ENCODE measurements at regions of chr6 and their contacts with region 1.

Region 1: DNA sequence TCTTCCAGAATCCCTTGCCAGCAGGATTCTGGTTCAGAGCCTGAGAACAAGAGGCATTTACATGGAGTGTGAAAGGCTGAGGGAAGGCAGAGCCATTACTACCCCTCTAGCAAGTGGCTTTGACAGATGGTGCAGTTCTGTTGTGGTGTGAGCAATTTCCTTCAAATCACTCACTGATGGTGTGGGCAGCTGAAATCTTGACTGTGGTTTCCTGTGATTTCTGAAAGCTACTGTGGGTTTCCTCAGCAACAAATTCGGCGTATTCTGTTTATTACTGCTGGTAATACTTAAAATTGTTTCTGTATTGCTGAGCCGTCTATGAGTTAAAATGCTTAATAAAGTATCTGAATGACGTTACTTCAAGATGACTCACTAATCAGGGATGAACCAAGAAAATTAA is 181.5 kb upstream of the TCF21 start:
- DNase-seq: no peak
- H3K4me3 ChIP-seq: no peak overlapping the region
- H3K27ac ChIP-seq: no peak overlapping the region
- H3K4me1 ChIP-seq: peaks cover 0 to 25% (median 5%) of the 10 kb centered on the region in 4 donors
- H3K27me3 ChIP-seq: no peaks in the 10 kb centered on the region
- CTCF ChIP-seq: no peak

Region 2: DNA sequence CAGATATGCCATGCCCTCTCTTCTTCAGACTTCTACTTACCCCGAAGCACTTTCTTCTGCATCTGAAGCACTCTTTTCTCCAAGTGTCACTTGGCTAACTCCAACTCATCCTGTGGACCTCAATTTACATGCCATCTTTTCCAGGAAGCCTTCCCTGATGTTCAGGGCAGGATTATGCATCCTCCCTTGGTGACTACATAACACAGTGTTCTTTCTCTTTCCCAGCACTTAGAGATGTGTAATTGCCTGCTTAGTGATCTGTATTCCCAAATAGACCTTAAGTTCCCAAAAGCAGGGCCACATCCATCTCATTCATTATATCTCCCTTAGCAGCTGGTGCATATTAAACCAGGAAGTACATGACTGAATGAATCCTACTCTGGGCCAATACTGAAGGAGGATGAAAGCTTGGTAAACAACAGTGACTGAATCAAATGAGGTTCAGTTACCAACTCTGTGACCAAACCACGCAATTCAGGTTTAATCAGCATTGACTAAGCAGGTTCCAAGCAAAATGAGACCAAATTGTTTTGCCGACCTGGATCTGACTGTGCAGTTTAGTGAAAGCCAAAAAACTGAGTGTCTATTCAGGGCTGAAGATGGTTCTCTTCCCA is 60.0 kb after region 1 on chr6:
- intact Hi-C with region 1: loop called (anchors 2 kb)
- DNase-seq: no peak
- H3K4me3 ChIP-seq: no peak overlapping the region
- H3K27ac ChIP-seq: no peak overlapping the region
- H3K4me1 ChIP-seq: peaks cover 0 to 32% (median 11%) of the 10 kb centered on the region in 4 donors
- H3K27me3 ChIP-seq: no peaks in the 10 kb centered on the region
- CTCF ChIP-seq: no peak

Region 3: DNA sequence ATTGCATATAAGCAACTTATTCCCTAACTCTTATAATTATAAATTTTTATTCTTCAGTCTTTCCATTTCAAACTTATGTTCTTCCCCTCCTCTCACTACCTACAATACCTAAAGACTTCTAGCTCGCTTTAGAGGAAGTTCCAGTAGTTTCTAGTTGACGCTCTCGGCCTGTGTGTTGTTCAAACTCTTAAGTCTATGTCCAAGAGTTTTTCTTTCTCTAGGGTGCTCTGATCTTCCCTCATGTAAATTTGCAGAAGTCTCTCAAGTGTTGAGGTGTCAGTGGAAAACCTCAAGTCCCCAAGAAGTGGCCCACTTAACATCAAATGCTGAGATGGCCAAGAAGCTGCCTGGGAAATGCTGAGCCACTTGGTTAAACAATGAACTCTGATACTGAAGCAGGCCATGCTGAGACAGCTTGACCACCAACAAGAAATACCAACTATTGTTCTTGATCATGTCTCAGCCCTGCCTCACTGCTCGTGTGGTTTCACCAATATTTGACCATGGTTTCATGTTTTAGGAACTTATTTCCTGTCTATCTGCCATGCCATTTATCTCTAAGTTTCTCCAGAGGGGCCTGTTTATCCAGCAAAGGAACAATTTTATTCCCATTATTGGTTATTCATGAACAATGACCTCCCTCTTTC is 80.5 kb after region 1 on chr6:
- intact Hi-C with region 1: no loop called
- DNase-seq: no peak
- H3K4me3 ChIP-seq: no peak overlapping the region
- H3K27ac ChIP-seq: no peak overlapping the region
- H3K4me1 ChIP-seq: peaks cover 0 to 11% (median 0%) of the 10 kb centered on the region in 4 donors
- H3K27me3 ChIP-seq: no peaks in the 10 kb centered on the region
- CTCF ChIP-seq: no peak

Region 4: GRCh38 chr6:133837801-133838349 is 130.4 kb after region 1 on chr6:
- intact Hi-C with region 1: no loop called
- DNase-seq: peak in 1 of 2 donors; percentile 29
- H3K4me3 ChIP-seq: peak overlapping the region; percentile 38 to 50
- H3K27ac ChIP-seq: no peak overlapping the region
- H3K4me1 ChIP-seq: peaks cover 0 to 6% (median 0%) of the 10 kb centered on the region in 4 donors
- H3K27me3 ChIP-seq: peaks cover 0 to 5% of the 10 kb centered on the region in 2 donors
- CTCF ChIP-seq: peak; percentile 36 to 46

Measured in tibial artery (tissue), 4 donors.